HepG2 (cell line): ENCODE measurements at regions of chr9 and their contacts with region 1.

Region 1: DNA sequence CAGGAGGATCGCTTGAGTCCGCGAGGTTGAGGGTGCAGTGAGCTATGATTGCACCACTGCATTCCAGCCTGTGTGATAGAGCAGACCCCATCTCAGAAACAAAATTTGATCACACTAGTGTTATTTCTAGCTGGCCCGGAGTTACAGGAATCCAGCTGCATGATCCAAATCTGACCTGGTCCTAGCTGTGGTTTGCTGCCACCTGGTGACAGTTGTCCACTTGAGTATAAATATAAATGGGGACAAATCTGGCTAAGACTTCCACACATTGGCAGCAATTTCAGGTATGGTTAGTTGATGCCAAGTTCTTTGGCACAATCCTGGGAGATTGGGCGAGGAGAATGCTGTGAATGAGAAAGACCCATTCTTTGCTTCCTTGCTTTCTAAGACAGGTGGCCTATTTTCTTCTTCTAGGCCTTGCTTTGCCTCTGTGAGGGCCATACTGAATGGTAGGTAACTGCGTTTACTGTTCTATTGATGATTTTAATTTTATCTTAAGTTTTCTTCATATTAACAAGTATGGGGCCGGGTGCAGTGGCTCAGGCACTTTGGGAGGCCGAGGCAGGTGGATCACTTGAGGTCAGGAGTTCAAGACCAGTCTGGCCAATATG is 35.4 kb downstream of the UBE2R2 start:
- DNase-seq: peak; percentile 56
- ATAC-seq: peak; percentile 79
- H3K4me3 ChIP-seq: no peak overlapping the region
- H3K27ac ChIP-seq: no peak overlapping the region
- H3K4me1 ChIP-seq: peaks cover 71% of the 10 kb centered on the region
- H3K27me3 ChIP-seq: no peaks in the 10 kb centered on the region
- CTCF ChIP-seq: peak; percentile 77
- EP300 ChIP-seq: no peak
- POLR2A ChIP-seq: no peak
- RAD21 ChIP-seq: peak; percentile 67; the same call in 1 of the 2 replicates

Region 2: DNA sequence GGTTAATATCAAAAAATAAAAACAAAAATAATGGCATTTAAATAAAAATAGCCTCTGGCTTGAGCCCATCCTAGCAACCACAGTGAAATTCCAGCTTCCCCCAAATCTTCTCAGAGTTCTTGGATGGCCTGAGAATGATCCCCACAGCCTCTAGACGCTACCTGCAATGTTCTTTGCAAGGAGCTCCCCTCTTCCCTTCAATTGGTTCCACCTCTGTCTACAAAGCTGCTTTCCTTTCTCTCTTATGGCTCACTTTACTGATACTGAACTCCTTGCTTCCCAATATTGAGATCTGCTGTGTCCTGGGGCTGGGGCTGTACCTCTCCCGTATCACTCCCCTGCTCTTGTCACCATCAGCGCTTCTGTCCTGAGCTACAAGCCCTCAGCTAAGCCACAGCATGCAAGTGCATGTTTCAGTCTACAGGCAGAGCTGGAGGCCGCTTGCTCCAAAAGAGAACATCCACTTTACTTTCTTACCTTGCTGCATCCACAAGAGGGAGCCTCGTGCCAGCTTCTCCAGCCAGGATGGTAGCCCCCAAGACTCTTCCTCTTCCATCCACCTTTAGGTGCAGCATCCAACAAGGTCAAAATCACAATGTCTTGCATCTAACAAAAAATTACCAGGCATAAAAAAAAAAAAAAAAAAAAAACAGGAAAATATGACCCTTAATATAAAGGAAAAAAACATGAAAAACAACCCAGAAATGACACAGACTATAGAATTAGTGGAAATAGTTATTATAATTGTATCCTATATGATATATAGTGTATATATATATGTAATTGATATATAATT is 114.3 kb before region 1 on chr9:
- CTCF ChIA-PET with region 1: interaction called, 8 read pairs
- POLR2A ChIA-PET with region 1: no interaction called
- in situ Hi-C with region 1: no loop called
- intact Hi-C with region 1: loop called (anchors 1 kb)
- DNase-seq: peak; percentile 56
- ATAC-seq: peak; percentile 95
- H3K4me3 ChIP-seq: no peak overlapping the region; a peak in 1 of 6 replicates
- H3K27ac ChIP-seq: no peak overlapping the region
- H3K4me1 ChIP-seq: peaks cover 13% of the 10 kb centered on the region; the same call in 1 of the 2 replicates
- H3K27me3 ChIP-seq: no peaks in the 10 kb centered on the region; a peak in 1 of 5 replicates
- CTCF ChIP-seq: peak; percentile 85
- EP300 ChIP-seq: no peak
- POLR2A ChIP-seq: no peak
- RAD21 ChIP-seq: peak; percentile 39; the same call in 1 of the 2 replicates

Region 3: DNA sequence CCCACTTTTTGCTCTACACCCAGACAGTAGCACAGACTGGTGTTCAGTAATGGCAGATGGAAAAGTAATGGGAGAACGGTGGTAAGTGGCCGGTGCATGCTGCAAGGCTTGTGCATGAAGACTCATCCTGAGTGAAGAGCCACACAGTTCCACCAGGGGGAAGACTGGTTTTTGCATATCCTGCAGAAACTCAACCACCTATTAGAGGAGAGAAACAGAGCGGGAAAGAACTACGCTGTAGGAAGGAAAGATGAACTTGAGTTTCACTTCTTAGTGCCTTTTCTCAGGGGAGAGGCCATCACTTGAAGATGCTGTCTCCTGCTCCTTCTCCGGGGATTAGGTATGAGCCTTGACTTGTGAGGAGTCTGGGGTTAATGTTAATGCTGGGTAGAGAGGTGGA is 66.4 kb before region 1 on chr9:
- CTCF ChIA-PET with region 1: interaction called, 10 read pairs
- POLR2A ChIA-PET with region 1: no interaction called
- in situ Hi-C with region 1: no loop called
- intact Hi-C with region 1: loop called (anchors 1 kb)
- DNase-seq: peak; percentile 60
- ATAC-seq: peak; percentile 100
- H3K4me3 ChIP-seq: no peak overlapping the region; a peak in 1 of 6 replicates
- H3K27ac ChIP-seq: no peak overlapping the region
- H3K4me1 ChIP-seq: peaks cover 10% of the 10 kb centered on the region
- H3K27me3 ChIP-seq: peaks cover 0 to 8% of the 10 kb centered on the region in 2 experiments; a peak in 1 of 5 replicates
- CTCF ChIP-seq: peak; percentile 79
- EP300 ChIP-seq: no peak
- POLR2A ChIP-seq: no peak
- RAD21 ChIP-seq: peak; percentile 43; the same call in 1 of the 2 replicates

Region 4: DNA sequence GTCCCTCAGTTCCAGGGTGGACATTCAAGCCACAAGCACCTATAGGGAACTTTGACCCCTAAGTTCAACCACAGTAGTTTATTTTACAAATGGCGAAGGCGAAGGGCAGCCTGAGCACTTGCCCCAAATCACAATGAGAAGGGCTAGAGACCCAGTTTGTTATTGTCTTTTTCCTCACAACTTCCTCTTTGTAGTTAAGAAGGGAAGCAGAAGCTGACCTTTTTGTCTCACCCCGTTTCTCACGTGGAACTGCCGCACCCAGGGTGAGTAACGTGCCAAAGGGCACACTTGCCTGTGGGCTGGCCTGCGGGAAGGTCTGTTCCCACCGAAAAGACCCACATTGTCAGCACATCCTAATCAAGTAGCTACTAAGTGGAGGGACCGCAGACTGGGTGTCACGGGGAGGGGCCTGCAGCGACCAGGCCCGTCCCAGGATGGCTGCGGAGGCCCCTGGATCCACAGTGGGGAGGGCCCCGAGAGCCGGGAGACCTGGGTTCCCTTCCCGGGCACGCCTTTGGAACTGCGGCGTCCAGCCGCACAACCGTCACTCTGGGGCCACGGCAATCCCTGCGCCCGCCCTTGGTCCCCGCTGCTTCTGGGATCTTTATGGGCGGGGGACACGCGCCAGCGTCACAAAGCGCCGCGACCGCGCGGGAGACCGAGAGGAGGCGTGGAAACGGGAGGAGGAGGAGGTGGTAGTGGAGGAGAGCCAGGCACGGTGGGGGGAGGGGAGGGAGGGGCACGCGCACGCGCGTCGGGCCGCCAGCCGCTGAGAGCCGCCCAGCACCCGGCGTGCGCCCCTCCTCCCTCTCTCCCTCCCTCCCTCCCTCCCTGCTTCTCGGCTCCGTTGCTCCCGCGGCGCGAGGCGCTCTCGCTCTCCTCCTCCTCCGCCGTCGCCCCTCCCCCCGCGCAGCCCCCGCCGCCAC is 35.7 kb before region 1 on chr9 and contains the start of gene UBE2R2:
- CTCF ChIA-PET with region 1: interaction called, 27 read pairs
- POLR2A ChIA-PET with region 1: interaction called, 4 read pairs
- in situ Hi-C with region 1: loop called (anchors 5 kb)
- intact Hi-C with region 1: loop called (anchors 1 kb)
- DNase-seq: peak; percentile 81
- ATAC-seq: peak; percentile 80
- H3K4me3 ChIP-seq: peak within 1 kb of the TSS; percentile 69 to 93 (median 77)
- H3K27ac ChIP-seq: peak within 1 kb of the TSS; percentile 93
- H3K4me1 ChIP-seq: peaks cover 58% of the 10 kb centered on the region
- H3K27me3 ChIP-seq: no peaks in the 10 kb centered on the region; a peak in 1 of 5 replicates
- CTCF ChIP-seq: no peak; the same call in 1 of the 2 replicates
- EP300 ChIP-seq: no peak
- POLR2A ChIP-seq: peak; percentile 85
- RAD21 ChIP-seq: peak; percentile 40; the same call in 1 of the 2 replicates
- total RNA-seq, gene UBE2R2: 14.8 and 19.5 TPM in 2 replicates